GM10248 (cell line): ENCODE measurements at regions of chr6 and their contacts with region 1.

Region 1: DNA sequence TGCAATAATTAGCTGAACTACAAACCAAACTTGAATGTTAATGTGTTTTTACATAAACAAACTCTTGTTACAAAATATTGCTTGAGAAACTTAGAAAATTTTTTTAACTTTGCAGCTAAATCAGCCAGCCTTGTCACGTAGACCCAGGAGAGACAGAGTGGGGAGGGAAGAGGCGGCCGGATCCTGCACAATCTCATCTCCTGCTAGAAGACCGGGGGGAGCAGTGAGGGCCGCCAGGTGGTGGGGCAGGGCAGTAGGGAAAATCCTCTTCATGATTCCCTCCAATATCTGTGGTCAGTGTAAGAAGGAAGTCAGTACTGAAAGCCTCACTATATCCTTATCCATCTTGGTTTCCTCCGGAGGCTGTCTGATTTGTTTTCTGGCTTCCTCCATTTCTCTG is 193.3 kb downstream of the PACRG start:
- DNase-seq: no peak
- CTCF ChIP-seq: no peak

Region 2: DNA sequence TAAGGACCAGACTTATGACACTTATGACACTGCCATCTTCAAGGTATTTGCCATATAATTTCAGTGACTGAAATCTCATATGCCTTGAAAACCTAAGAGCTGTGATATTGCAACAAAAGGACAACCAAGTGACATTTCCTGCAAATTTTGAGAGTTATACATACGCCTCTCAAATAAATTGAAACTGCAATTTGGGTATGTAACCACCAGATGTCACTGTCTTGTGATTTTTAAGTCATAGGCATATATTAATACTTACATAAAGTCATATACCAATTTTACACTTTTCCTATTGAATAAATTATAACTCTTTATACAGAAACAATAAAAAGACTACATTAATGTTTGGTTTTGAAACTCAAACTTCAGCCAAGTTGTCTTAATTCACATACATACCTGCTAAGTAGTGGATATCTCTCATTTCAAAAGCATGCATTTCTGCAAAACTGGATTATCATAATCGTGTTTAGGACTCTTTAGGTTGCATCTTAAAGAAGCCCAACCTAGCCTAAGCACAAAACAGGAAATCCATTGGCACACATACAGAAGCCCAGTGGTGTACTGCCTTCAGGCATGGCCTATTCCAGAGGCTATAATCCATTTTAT is 13.1 kb before region 1 on chr6:
- CTCF ChIA-PET with region 1: interaction called, 10 read pairs
- POLR2A ChIA-PET with region 1: no interaction called
- DNase-seq: no peak
- CTCF ChIP-seq: peak; percentile 46

Region 3: GRCh38 chr6:163001330-163001729 is 80.3 kb after region 1 on chr6:
- CTCF ChIA-PET with region 1: no interaction called
- POLR2A ChIA-PET with region 1: no interaction called
- DNase-seq: peak; percentile 34
- CTCF ChIP-seq: no peak